Heart right ventricle (tissue), 16 donors: ENCODE measurements at regions of chr6 and their contacts with region 1.

Region 1: DNA sequence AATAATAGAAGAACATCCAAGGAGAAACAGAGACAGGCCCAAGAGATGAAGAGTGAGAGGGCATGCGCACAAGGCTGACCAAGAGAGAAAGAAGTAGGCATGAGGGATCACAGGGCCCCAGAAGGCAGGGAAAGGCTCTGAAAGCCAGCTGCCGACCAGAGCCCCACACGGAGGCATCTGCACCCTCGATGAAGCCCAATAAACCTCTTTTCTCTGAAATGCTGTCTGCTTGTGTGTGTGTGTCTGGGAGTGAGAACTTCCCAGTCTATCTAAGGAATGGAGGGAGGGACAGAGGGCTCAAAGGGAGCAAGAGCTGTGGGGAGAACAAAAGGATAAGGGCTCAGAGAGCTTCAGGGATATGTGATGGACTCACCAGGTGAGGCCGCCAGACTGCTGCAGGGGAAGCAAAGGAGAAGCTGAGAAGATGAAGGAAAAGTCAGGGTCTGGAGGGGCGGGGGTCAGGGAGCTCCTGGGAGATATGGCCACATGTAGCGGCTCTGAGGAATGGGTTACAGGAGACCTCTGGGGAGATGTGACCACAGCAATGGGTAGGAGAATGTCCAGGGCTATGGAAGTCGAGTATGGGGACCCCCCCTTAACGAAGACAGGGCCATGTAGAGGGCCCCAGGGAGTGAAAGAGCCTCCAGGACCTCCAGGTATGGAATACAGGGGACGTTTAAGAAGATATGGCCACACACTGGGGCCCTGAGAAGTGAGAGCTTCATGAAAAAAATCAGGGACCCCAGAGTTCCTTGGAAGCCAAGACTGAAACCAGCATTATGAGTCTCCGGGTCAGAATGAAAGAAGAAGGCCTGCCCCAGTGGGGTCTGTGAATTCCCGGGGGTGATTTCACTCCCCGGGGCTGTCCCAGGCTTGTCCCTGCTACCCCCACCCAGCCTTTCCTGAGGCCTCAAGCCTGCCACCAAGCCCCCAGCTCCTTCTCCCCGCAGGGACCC is 981 bp upstream of the TNF start:
- DNase-seq: no peak
- ATAC-seq: no peak
- H3K4me3 ChIP-seq: peak overlapping the region in 3 of 10 donors; percentile 56 to 65 (median 56)
- H3K27ac ChIP-seq: peak overlapping the region in 6 of 10 donors; percentile 74 to 90 (median 82)
- H3K4me1 ChIP-seq: peaks cover 0 to 41% (median 5%) of the 10 kb centered on the region in 9 donors
- H3K27me3 ChIP-seq: peaks cover 0 to 11% (median 0%) of the 10 kb centered on the region in 7 donors
- CTCF ChIP-seq: no peak

Region 2: DNA sequence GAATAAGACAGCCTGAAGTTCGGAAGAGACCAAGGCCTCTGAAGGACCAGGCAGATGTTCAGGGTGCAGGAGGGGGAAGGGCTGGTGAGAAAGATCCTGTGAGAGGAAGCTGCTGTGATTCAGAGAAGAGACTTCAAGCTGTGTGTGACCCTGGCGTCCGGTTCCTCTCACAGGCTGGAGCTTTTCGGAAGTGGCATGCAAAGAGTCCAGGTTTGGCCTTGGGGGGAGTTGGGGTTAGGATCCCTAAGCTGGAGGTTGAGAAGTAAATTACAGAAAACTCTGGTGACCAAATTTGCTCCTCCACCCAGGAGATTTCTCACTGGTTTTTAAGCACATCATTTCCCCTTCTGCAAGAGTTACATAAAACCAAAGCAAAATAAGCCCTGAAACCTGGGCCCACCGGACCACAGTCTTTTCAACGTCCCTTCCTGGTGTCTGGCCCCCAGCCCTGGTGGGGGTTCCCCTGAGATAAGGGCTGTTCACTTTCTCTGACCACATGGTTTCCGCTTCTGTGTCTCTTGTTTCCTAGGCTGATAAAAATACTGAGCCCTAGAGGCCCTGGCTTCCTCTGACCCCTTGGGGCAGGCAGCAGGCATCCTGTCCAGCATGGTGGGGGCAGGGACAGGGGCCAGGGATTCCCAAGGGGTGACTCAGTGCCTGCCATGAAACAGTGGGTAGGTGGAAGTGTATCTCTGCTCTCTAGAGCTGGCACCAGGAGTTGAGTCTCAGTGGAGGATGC is 14.3 kb before region 1 on chr6:
- intact Hi-C with region 1: loop called in 1 of 10 experiments (anchors 1 kb)
- DNase-seq: peak; percentile 67 to 85
- ATAC-seq: peak; percentile 82 to 93 (median 87)
- H3K4me3 ChIP-seq: peak overlapping the region in 2 of 10 donors; percentile 2 to 33
- H3K27ac ChIP-seq: peak overlapping the region; percentile 27 to 91 (median 80)
- H3K4me1 ChIP-seq: peaks cover 20 to 83% (median 40%) of the 10 kb centered on the region in 9 donors
- H3K27me3 ChIP-seq: no peaks in the 10 kb centered on the region
- CTCF ChIP-seq: no peak